Ovary (tissue), 10 donors: ENCODE measurements at regions of chrX and their contacts with region 1.

Region 1: GRCh38 chrX:123682186-123682585 is 50.7 kb downstream of the THOC2 start:
- DNase-seq: no peak
- H3K4me3 ChIP-seq: no peak overlapping the region
- H3K27ac ChIP-seq: no peak overlapping the region
- H3K4me1 ChIP-seq: no peaks in the 10 kb centered on the region
- H3K27me3 ChIP-seq: no peaks in the 10 kb centered on the region
- CTCF ChIP-seq: no peak
- EP300 ChIP-seq: no peak
- POLR2A ChIP-seq: no peak

Region 2: GRCh38 chrX:123330229-123330942 is 351.8 kb before region 1 on chrX:
- intact Hi-C with region 1: no loop called
- DNase-seq: no peak
- H3K4me3 ChIP-seq: no peak overlapping the region
- H3K27ac ChIP-seq: no peak overlapping the region
- H3K4me1 ChIP-seq: no peaks in the 10 kb centered on the region
- H3K27me3 ChIP-seq: no peaks in the 10 kb centered on the region
- CTCF ChIP-seq: no peak
- EP300 ChIP-seq: no peak
- POLR2A ChIP-seq: no peak

Region 3: GRCh38 chrX:123713841-123714240 is 31.7 kb after region 1 on chrX:
- intact Hi-C with region 1: loop called in 1 of 4 experiments (anchors 2 kb)
- DNase-seq: no peak
- H3K4me3 ChIP-seq: no peak overlapping the region
- H3K27ac ChIP-seq: no peak overlapping the region
- H3K4me1 ChIP-seq: no peaks in the 10 kb centered on the region
- H3K27me3 ChIP-seq: no peaks in the 10 kb centered on the region
- CTCF ChIP-seq: no peak
- EP300 ChIP-seq: no peak
- POLR2A ChIP-seq: no peak